CD8-positive, alpha-beta T cell (primary cell): ENCODE measurements at regions of chr18 and their contacts with region 1.

Region 1: DNA sequence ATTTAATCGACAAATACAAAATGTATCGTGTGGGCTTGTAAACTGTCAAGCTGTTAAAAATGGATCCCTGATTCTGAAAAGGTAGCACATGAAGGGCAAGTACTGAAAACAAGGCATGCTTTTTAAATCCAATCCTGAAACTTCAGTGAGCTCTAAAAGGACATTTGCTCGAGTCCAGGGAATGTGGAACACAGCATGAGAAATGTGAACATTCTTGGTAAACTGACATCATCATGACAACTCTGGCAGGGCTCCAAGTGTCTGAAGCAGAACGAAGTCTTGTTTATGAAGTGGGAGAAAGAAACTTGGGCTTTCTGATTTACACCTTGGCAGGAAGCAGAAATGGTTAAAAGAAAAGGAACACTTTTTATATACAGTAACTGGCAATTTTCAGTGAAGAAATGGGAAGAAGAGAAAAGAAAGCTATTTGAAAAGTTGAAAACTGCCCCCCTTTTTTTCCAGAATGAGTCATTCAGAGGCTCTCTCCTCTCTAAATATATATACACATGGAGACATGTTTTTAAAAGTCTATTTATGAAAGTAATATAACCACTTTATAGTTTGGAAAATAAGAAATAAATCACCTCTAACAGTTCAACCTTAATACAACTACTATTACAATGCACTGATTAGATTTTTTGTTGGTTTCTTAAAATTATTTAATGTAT is 120.8 kb downstream of the GAREM1 start:
- DNase-seq: no peak
- ATAC-seq: no peak
- H3K4me3 ChIP-seq: no peak overlapping the region
- H3K4me3 Mint-ChIP-seq: no peak overlapping the region
- H3K27ac ChIP-seq: no peak overlapping the region
- H3K27ac Mint-ChIP-seq: no peak overlapping the region
- H3K4me1 ChIP-seq: no peaks in the 10 kb centered on the region
- H3K4me1 Mint-ChIP-seq: no peaks in the 10 kb centered on the region
- H3K27me3 ChIP-seq: no peaks in the 10 kb centered on the region
- H3K27me3 Mint-ChIP-seq: no peaks in the 10 kb centered on the region
- CTCF ChIP-seq: no peak

Region 2: GRCh38 chr18:32301976-32302743 is 47.7 kb before region 1 on chr18:
- CTCF ChIA-PET with region 1: no interaction called
- POLR2A ChIA-PET with region 1: no interaction called
- intact Hi-C with region 1: loop called in 1 of 2 experiments (anchors 5 kb)
- DNase-seq: no peak
- ATAC-seq: no peak
- H3K4me3 ChIP-seq: no peak overlapping the region
- H3K4me3 Mint-ChIP-seq: no peak overlapping the region
- H3K27ac ChIP-seq: no peak overlapping the region
- H3K27ac Mint-ChIP-seq: no peak overlapping the region
- H3K4me1 ChIP-seq: no peaks in the 10 kb centered on the region
- H3K4me1 Mint-ChIP-seq: no peaks in the 10 kb centered on the region
- H3K27me3 ChIP-seq: no peaks in the 10 kb centered on the region
- H3K27me3 Mint-ChIP-seq: peaks cover 5% of the 10 kb centered on the region
- CTCF ChIP-seq: no peak